ENCODE measurements at regions of chr11 and their contacts with region 1.

Region 1: DNA sequence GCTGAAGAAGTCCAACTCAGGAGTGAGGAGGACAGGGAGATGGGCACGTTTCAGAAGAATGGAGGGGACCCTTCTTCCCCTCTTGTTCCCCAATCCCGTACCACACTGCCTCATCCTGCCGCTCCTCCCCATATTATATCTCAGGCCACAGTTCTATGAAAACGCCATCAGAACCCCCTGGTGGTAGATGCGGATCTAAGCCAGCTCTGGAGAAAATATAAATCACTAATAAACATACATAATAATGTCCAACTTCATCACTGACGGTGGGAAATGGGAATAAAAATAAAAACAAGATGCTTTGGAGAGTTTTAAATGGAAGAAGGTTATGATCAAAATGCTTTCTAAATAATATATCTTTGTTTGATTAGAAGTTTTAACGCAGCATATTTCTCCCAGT is 400.3 kb downstream of the CADM1 start:
- DNase-seq: no peak
- H3K4me3 Mint-ChIP-seq: no peak overlapping the region
- H3K27ac Mint-ChIP-seq: no peak overlapping the region
- H3K4me1 Mint-ChIP-seq: no peaks in the 10 kb centered on the region
- H3K27me3 Mint-ChIP-seq: no peaks in the 10 kb centered on the region

Region 2: DNA sequence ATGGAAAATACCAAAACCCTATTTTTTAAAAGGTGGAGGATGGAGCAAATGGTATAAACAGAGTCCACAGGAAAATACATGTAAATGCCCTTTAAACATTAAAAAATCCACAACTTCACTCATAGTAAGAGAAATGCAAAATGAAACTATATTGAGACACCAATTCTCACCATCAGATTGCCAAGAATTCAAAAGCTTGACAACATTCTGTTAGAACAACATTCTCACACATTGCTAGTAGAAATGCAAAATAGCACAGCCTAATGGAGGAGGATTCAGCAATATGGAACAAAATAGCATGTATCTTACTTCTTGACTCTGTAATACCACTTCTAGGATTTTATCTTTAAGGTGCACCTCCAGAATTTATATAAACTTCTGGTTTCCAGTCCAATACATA is 73.8 kb before region 1 on chr11:
- intact Hi-C with region 1: no loop called
- DNase-seq: no peak
- H3K4me3 Mint-ChIP-seq: no peak overlapping the region
- H3K27ac Mint-ChIP-seq: no peak overlapping the region
- H3K4me1 Mint-ChIP-seq: no peaks in the 10 kb centered on the region
- H3K27me3 Mint-ChIP-seq: no peaks in the 10 kb centered on the region

Region 3: DNA sequence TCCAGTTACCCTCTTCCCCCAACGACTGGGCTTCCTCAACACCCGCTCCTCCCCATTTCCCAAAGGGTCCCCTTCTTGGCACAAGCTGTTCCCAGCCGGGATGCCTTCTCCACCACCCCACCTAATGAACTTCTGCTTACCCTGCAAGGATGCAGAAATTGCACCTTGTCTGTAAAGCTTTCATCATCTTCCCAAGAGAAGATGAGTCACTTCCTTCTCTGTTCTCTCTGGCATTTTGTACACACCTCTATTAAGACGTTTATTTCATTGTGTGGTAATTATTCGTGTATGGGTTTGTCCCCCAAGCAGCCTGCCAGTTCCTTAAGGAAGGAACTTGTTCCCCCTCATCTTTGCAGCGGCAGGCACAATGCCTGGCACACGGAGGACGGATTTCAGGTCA is 49.2 kb after region 1 on chr11:
- intact Hi-C with region 1: loop called (anchors 5 kb)
- DNase-seq: no peak
- H3K4me3 Mint-ChIP-seq: no peak overlapping the region
- H3K27ac Mint-ChIP-seq: no peak overlapping the region
- H3K4me1 Mint-ChIP-seq: peaks cover 5% of the 10 kb centered on the region
- H3K27me3 Mint-ChIP-seq: no peaks in the 10 kb centered on the region